CD8-positive, alpha-beta T cell (primary cell): ENCODE measurements at regions of chr6 and their contacts with region 1.

Region 1: GRCh38 chr6:90296346-90297114 is at the start of gene BACH2:
- DNase-seq: peak; percentile 87 to 97 (median 96)
- ATAC-seq: peak; percentile 74
- H3K4me3 ChIP-seq: peak within 1 kb of the TSS; percentile 69 to 71
- H3K4me3 Mint-ChIP-seq: peak within 1 kb of the TSS; percentile 94
- H3K27ac ChIP-seq: peak within 1 kb of the TSS; percentile 59 to 88
- H3K27ac Mint-ChIP-seq: peak within 1 kb of the TSS; percentile 94
- H3K4me1 ChIP-seq: peaks cover 27% of the 10 kb centered on the region
- H3K4me1 Mint-ChIP-seq: peaks cover 38% of the 10 kb centered on the region
- H3K27me3 ChIP-seq: no peaks in the 10 kb centered on the region
- H3K27me3 Mint-ChIP-seq: no peaks in the 10 kb centered on the region
- CTCF ChIP-seq: no peak
- total RNA-seq, gene BACH2: 162 to 164 TPM

Region 2: GRCh38 chr6:89034586-89035251 is 1261.8 kb before region 1 on chr6:
- CTCF ChIA-PET with region 1: no interaction called
- POLR2A ChIA-PET with region 1: no interaction called
- intact Hi-C with region 1: no loop called
- DNase-seq: peak in 1 of 9 experiments; percentile 35
- ATAC-seq: no peak
- H3K4me3 ChIP-seq: no peak overlapping the region
- H3K4me3 Mint-ChIP-seq: no peak overlapping the region
- H3K27ac ChIP-seq: no peak overlapping the region
- H3K27ac Mint-ChIP-seq: no peak overlapping the region
- H3K4me1 ChIP-seq: no peaks in the 10 kb centered on the region
- H3K4me1 Mint-ChIP-seq: no peaks in the 10 kb centered on the region
- H3K27me3 ChIP-seq: no peaks in the 10 kb centered on the region
- H3K27me3 Mint-ChIP-seq: no peaks in the 10 kb centered on the region
- CTCF ChIP-seq: no peak

Region 3: GRCh38 chr6:89940225-89941027 is 356.1 kb before region 1 on chr6:
- CTCF ChIA-PET with region 1: interaction called, 14 read pairs
- POLR2A ChIA-PET with region 1: interaction called, 6 read pairs
- intact Hi-C with region 1: loop called (anchors 2 to 5 kb)
- DNase-seq: peak; percentile 38 to 87 (median 69)
- ATAC-seq: peak; percentile 95
- H3K4me3 ChIP-seq: no peak overlapping the region
- H3K4me3 Mint-ChIP-seq: no peak overlapping the region
- H3K27ac ChIP-seq: no peak overlapping the region
- H3K27ac Mint-ChIP-seq: peak overlapping the region; percentile 81
- H3K4me1 ChIP-seq: peaks cover 16% of the 10 kb centered on the region
- H3K4me1 Mint-ChIP-seq: peaks cover 40% of the 10 kb centered on the region
- H3K27me3 ChIP-seq: no peaks in the 10 kb centered on the region
- H3K27me3 Mint-ChIP-seq: no peaks in the 10 kb centered on the region
- CTCF ChIP-seq: peak; percentile 80

Region 4: DNA sequence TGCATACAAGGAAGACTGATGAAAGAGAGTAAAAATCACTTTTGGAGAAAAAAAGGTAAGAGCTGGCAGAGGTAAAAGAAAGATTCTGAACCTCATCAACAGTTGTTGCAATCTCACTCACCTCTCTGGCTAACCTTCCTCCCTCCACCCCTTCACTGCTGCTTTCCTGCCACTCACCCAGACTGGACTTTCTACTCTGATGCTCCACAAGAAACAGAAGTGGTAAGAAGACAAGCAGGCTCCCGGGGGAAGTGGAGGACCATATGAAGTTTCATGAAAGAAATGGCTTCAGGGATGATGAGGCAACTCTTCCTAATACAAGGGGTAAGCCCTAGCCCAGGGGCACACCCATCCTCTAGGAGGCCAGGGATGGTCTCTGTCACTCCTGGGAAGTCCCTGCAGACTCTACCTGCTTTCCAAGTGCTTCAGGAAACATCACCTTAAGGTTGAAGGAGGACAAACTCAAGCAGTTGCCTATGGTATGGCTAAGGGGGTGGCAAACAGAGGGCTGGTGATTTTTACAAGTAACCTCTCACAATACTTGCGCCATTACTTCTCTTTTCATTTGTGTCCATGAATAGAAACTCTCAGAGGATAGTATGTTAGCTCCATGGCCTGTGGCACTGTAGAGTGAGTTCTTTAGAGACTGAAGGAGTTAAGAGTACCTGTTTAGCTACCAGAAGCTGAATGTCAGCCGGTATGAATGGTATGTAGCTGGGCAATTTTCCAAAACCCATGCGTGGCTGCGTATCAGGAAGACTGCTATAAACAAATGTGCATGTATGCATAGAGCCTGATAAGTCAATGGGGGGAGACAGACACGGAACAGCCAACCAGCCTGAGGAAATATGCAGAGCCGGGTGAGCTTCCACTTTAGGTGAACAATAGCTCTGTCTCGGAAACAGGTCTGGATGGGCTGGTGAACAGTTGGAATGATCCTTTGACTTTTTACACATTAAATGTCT is 111.9 kb before region 1 on chr6:
- CTCF ChIA-PET with region 1: interaction called, 8 read pairs
- POLR2A ChIA-PET with region 1: interaction called, 3 read pairs
- intact Hi-C with region 1: loop called in 1 of 2 experiments (anchors 2 kb)
- DNase-seq: peak in 4 of 9 experiments; percentile 22 to 66 (median 30)
- ATAC-seq: peak; percentile 19
- H3K4me3 ChIP-seq: no peak overlapping the region
- H3K4me3 Mint-ChIP-seq: peak overlapping the region; percentile 66
- H3K27ac ChIP-seq: peak overlapping the region in 1 of 2 experiments; percentile 34
- H3K27ac Mint-ChIP-seq: peak overlapping the region; percentile 98
- H3K4me1 ChIP-seq: peaks cover 70% of the 10 kb centered on the region
- H3K4me1 Mint-ChIP-seq: peaks cover 78% of the 10 kb centered on the region
- H3K27me3 ChIP-seq: no peaks in the 10 kb centered on the region
- H3K27me3 Mint-ChIP-seq: no peaks in the 10 kb centered on the region
- CTCF ChIP-seq: no peak

Region 5: DNA sequence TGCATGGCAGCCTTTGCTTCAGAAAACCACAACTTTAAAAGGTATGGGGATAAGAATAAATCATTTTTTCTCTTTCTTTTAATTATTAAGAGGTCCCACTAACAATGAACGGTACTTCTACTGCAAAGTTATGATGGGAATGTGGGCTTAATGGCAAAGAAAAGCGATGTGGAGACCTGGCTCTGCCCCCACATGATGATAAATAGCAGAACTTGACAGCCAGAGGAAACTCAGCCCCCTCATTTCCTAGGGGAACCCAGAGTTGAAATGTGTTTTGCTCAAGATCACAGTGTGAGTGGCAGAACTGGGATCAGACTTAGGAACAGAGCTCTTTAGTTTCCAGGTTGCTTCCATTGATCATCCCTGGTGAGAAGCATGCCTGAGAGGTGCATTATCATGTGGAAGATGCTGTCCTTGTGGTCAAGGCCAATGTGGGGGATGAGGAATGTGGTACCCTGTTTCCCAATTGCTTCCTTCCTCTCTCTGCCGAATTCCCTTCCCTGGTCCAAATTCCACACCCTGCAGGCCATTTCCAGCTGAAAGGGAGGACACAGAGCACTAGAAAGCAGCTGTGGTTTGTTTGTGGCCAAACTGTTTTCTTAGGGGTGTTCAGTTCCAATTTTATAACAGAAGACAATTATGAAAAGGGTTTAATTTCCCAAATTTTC is 65.8 kb before region 1 on chr6:
- CTCF ChIA-PET with region 1: interaction called, 4 read pairs
- POLR2A ChIA-PET with region 1: no interaction called
- intact Hi-C with region 1: loop called in 1 of 2 experiments (anchors 5 kb)
- DNase-seq: no peak
- ATAC-seq: no peak
- H3K4me3 ChIP-seq: no peak overlapping the region
- H3K4me3 Mint-ChIP-seq: peak overlapping the region; percentile 45
- H3K27ac ChIP-seq: peak overlapping the region in 1 of 2 experiments; percentile 32
- H3K27ac Mint-ChIP-seq: peak overlapping the region; percentile 95
- H3K4me1 ChIP-seq: peaks cover 95% of the 10 kb centered on the region
- H3K4me1 Mint-ChIP-seq: peaks cover 92% of the 10 kb centered on the region
- H3K27me3 ChIP-seq: no peaks in the 10 kb centered on the region
- H3K27me3 Mint-ChIP-seq: no peaks in the 10 kb centered on the region
- CTCF ChIP-seq: no peak

Region 6: GRCh38 chr6:90274451-90275030 is 22.0 kb before region 1 on chr6:
- CTCF ChIA-PET with region 1: interaction called, 8 read pairs
- POLR2A ChIA-PET with region 1: interaction called, 4 read pairs
- intact Hi-C with region 1: loop called (anchors 1 kb)
- DNase-seq: peak; percentile 80 to 98 (median 86)
- ATAC-seq: peak; percentile 86
- H3K4me3 ChIP-seq: peak overlapping the region in 1 of 2 experiments; percentile 10
- H3K4me3 Mint-ChIP-seq: peak overlapping the region; percentile 74
- H3K27ac ChIP-seq: peak overlapping the region; percentile 67 to 90
- H3K27ac Mint-ChIP-seq: peak overlapping the region; percentile 98
- H3K4me1 ChIP-seq: peaks cover 87% of the 10 kb centered on the region
- H3K4me1 Mint-ChIP-seq: peaks cover 90% of the 10 kb centered on the region
- H3K27me3 ChIP-seq: no peaks in the 10 kb centered on the region
- H3K27me3 Mint-ChIP-seq: no peaks in the 10 kb centered on the region
- CTCF ChIP-seq: peak; percentile 47

Region 7: GRCh38 chr6:90350689-90351554 is 54.4 kb after region 1 on chr6:
- CTCF ChIA-PET with region 1: no interaction called
- POLR2A ChIA-PET with region 1: no interaction called
- intact Hi-C with region 1: loop called (anchors 1 to 5 kb)
- DNase-seq: peak; percentile 5 to 87 (median 44)
- ATAC-seq: peak; percentile 98
- H3K4me3 ChIP-seq: peak overlapping the region in 1 of 2 experiments; percentile 29
- H3K4me3 Mint-ChIP-seq: peak overlapping the region; percentile 23
- H3K27ac ChIP-seq: peak overlapping the region in 1 of 2 experiments; percentile 58
- H3K27ac Mint-ChIP-seq: peak overlapping the region; percentile 84
- H3K4me1 ChIP-seq: peaks cover 11% of the 10 kb centered on the region
- H3K4me1 Mint-ChIP-seq: peaks cover 18% of the 10 kb centered on the region
- H3K27me3 ChIP-seq: no peaks in the 10 kb centered on the region
- H3K27me3 Mint-ChIP-seq: no peaks in the 10 kb centered on the region
- CTCF ChIP-seq: no peak